CD8-positive, alpha-beta T cell (primary cell): ENCODE measurements at regions of chr1 and their contacts with region 1.

Region 1: GRCh38 chr1:169348383-169349036 is 19.1 kb downstream of the NME7 start:
- DNase-seq: peak in 4 of 9 experiments; percentile 20 to 77 (median 44)
- ATAC-seq: peak; percentile 49
- H3K4me3 ChIP-seq: no peak overlapping the region
- H3K4me3 Mint-ChIP-seq: no peak overlapping the region
- H3K27ac ChIP-seq: no peak overlapping the region
- H3K27ac Mint-ChIP-seq: no peak overlapping the region
- H3K4me1 ChIP-seq: no peaks in the 10 kb centered on the region
- H3K4me1 Mint-ChIP-seq: peaks cover 8% of the 10 kb centered on the region
- H3K27me3 ChIP-seq: no peaks in the 10 kb centered on the region
- H3K27me3 Mint-ChIP-seq: no peaks in the 10 kb centered on the region
- CTCF ChIP-seq: peak; percentile 99

Region 2: GRCh38 chr1:168234846-168235547 is 1113.5 kb before region 1 on chr1:
- CTCF ChIA-PET with region 1: interaction called, 12 read pairs
- POLR2A ChIA-PET with region 1: no interaction called
- intact Hi-C with region 1: loop called in 1 of 2 experiments (anchors 5 kb)
- DNase-seq: peak in 5 of 9 experiments; percentile 20 to 69 (median 36)
- ATAC-seq: peak; percentile 98
- H3K4me3 ChIP-seq: no peak overlapping the region
- H3K4me3 Mint-ChIP-seq: no peak overlapping the region
- H3K27ac ChIP-seq: no peak overlapping the region
- H3K27ac Mint-ChIP-seq: peak overlapping the region; percentile 38
- H3K4me1 ChIP-seq: peaks cover 2% of the 10 kb centered on the region
- H3K4me1 Mint-ChIP-seq: peaks cover 48% of the 10 kb centered on the region
- H3K27me3 ChIP-seq: no peaks in the 10 kb centered on the region
- H3K27me3 Mint-ChIP-seq: no peaks in the 10 kb centered on the region
- CTCF ChIP-seq: peak; percentile 56

Region 3: DNA sequence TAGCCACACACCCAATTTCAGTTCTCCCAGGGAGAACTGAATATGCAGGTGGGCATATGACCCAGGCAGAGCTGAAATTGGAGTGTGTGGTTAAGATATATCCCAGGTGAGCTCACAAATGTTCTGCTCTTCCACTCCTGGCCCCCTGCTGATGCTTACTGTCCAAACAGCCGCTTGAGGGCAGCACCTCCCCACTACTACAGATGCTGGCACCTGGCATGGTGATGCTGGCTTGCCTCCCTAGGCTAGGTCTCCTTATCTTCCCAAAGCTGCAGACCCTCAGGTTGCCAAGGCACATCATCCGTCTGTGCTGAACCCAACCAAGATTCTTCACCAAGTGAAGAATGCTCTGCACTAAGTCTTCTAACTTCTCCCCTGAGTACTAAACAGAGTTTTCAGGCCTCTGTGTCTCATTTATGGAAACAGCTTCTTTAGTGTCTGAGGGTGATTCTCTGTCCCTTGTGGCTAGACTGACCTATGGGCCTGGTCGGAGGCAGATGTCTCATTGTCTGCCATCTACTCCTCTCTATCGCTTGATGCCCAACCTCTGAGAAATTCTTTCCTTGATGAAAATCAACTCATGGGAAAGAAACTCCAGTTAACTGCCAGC is 744.9 kb before region 1 on chr1:
- CTCF ChIA-PET with region 1: interaction called, 123 read pairs
- POLR2A ChIA-PET with region 1: interaction called, 3 read pairs
- intact Hi-C with region 1: loop called (anchors 1 kb)
- DNase-seq: peak; percentile 38 to 78 (median 68)
- ATAC-seq: peak; percentile 67
- H3K4me3 ChIP-seq: no peak overlapping the region
- H3K4me3 Mint-ChIP-seq: no peak overlapping the region
- H3K27ac ChIP-seq: no peak overlapping the region
- H3K27ac Mint-ChIP-seq: no peak overlapping the region
- H3K4me1 ChIP-seq: no peaks in the 10 kb centered on the region
- H3K4me1 Mint-ChIP-seq: no peaks in the 10 kb centered on the region
- H3K27me3 ChIP-seq: no peaks in the 10 kb centered on the region
- H3K27me3 Mint-ChIP-seq: no peaks in the 10 kb centered on the region
- CTCF ChIP-seq: peak; percentile 63

Region 4: DNA sequence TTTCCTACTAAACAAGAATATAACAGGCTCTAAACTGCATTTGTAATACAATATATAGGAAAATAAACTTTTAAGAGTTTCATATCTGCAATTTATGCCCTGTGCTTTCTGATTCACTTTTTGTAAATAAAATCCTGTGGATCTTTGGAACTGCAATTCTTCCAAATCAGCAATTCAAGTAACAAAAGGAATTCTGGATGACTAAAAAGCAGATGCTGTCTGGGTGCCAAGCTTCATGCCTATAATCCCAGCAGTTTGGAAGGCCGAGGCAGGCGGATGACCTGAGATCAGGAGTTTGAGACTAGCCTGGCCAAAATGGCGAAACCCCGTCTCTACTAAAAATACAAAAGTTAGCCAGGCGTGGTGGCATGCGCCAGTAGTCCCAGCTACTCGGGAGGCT is 12.8 kb after region 1 on chr1:
- CTCF ChIA-PET with region 1: interaction called, 12 read pairs
- POLR2A ChIA-PET with region 1: interaction called, 3 read pairs
- intact Hi-C with region 1: no loop called
- DNase-seq: no peak
- ATAC-seq: no peak
- H3K4me3 ChIP-seq: no peak overlapping the region
- H3K4me3 Mint-ChIP-seq: no peak overlapping the region
- H3K27ac ChIP-seq: no peak overlapping the region
- H3K27ac Mint-ChIP-seq: no peak overlapping the region
- H3K4me1 ChIP-seq: peaks cover 5% of the 10 kb centered on the region
- H3K4me1 Mint-ChIP-seq: peaks cover 29% of the 10 kb centered on the region
- H3K27me3 ChIP-seq: no peaks in the 10 kb centered on the region
- H3K27me3 Mint-ChIP-seq: no peaks in the 10 kb centered on the region
- CTCF ChIP-seq: no peak